Posterior vena cava (tissue), 2 donors: ENCODE measurements at regions of chr9 and their contacts with region 1.

Region 1: DNA sequence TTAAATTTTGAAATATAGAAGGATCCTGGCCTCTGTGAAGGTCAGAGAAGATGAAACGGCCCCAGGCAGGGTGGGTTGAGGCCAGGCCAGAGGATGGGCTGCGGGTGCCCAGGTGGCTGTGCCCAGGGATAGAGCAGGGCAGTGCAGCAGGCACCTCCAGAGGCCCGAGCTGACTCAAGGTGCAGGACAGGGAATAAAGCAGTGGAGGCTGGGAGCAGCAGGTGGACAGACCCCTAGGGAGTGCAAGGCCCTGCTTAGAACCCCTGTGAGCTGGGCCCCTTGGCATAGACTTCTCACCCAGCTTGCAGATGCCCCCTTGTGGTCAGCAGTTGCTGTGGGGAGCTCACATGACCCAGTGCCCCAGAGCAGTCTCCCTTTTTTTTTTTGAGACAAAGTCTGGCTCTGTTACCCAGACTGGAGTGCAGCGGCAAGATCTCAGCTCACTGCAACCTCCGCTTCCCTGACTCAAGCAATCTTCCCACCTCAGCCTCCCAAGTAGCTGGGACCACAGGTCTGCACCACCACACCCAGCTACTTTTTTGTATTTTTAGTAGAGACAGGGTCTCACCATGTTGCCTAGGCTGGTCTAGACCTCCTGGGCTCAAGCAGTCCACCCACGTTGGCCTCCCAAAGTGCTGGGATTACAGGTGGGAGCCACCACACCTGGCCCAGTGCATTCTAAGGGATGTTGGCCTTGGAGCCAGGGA is 118.8 kb downstream of the WNK2 start:
- DNase-seq: peak; percentile 82

Region 2: GRCh38 chr9:93159601-93160471 is 142.9 kb before region 1 on chr9:
- intact Hi-C with region 1: loop called (anchors 1 to 5 kb)
- DNase-seq: peak; percentile 94

Region 3: DNA sequence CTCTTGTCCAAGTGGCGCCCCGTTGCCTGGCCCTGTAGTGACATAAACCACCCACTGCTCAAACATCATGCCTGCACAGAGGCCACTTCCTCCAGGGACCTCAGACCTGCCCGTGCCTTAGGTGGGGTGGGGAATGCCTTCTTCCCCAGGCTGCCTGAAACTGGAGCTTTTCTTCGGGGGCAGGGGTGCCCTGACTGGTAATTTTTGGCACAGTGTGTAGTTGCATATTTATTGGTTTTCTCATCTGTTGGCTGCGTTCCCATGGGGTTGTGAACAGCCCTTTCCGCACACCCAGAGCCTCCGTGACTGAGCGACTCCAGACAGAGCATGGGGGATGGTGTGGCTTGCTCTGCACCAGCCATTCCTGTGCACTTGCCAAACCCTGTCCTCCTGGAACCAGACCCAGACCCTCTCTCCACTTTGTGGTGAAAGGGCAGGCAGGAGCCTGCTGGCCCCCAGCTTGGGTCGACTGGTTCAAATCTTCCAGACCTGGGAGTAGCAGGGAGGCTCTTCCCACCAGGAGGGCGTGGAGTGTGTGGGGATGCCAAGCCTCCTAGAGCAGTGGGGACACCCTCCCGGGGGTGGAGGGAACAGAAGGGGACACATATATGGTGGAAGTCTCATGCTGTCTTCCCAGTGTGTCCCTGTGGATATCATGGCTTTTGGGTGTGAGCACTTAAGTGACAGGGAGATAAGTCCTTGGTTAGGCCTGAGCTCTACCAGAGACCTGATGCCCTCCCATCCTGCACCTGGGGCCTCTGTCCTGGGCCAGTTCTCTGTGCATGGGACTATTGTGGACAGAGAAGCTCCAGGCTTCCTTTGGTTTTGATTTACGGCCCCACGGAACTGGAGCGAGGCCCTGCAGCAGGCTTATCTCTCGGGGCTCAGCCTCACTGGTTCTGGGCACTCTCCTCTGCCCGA is 79.2 kb before region 1 on chr9:
- intact Hi-C with region 1: no loop called
- DNase-seq: no peak

Region 4: GRCh38 chr9:93500571-93501298 is 198.0 kb after region 1 on chr9:
- intact Hi-C with region 1: no loop called
- DNase-seq: no peak